Activated naive CD4-positive, alpha-beta T cell treated with anti-CD3 and anti-CD28 coated beads for 36 hours (primary cell): ENCODE measurements at regions of chr17 and their contacts with region 1.

Region 1: GRCh38 chr17:28318759-28319660 is at the start of gene TMEM97:
- DNase-seq: peak; percentile 95
- H3K4me3 Mint-ChIP-seq: peak within 1 kb of the TSS; percentile 81
- H3K27ac Mint-ChIP-seq: peak within 1 kb of the TSS; percentile 75
- H3K4me1 Mint-ChIP-seq: peaks cover 24% of the 10 kb centered on the region
- H3K27me3 Mint-ChIP-seq: no peaks in the 10 kb centered on the region
- total RNA-seq, gene TMEM97: 25.1 to 26.0 TPM

Region 2: DNA sequence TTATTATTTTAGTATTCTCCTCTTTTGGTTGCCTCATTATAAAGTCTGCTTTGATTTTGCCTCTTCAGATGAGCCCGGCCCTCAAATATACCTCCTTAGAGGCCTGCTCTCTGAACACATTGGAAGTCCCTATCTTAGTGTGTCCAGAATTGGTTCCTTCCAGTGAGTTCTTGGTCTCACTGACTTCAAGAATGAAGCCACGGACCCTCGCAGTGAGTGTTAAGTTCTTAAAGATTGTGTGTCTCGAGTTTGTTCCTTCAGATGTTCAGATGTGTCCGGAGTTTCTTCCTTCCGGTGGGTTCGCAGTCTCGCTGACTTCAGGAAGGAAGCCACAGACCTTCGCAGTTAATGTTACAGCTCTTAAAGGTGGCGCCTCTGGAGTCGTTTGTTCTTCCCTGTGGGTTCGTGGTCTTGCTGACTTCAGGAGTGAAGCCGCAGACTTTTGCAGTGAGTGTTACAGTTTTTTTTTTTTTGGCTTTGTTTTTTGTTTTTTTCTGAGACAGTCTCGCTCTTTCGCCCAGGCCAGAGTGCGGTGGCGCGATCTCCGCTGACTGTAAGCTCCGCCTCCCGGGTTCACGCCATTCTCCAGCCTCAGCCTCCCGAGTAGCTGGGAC is 472.9 kb before region 1 on chr17:
- CTCF ChIA-PET with region 1: no interaction called
- intact Hi-C with region 1: no loop called
- DNase-seq: peak; percentile 30
- H3K4me3 Mint-ChIP-seq: peak overlapping the region; percentile 60
- H3K27ac Mint-ChIP-seq: peak overlapping the region; percentile 34
- H3K4me1 Mint-ChIP-seq: peaks cover 16% of the 10 kb centered on the region
- H3K27me3 Mint-ChIP-seq: no peaks in the 10 kb centered on the region

Region 3: GRCh38 chr17:28227316-28228125 is 91.5 kb before region 1 on chr17:
- CTCF ChIA-PET with region 1: no interaction called
- intact Hi-C with region 1: loop called (anchors 5 kb)
- DNase-seq: peak; percentile 38
- H3K4me3 Mint-ChIP-seq: peak overlapping the region; percentile 69
- H3K27ac Mint-ChIP-seq: no peak overlapping the region
- H3K4me1 Mint-ChIP-seq: peaks cover 5% of the 10 kb centered on the region
- H3K27me3 Mint-ChIP-seq: peaks cover 37% of the 10 kb centered on the region

Region 4: GRCh38 chr17:28258347-28259206 is 60.4 kb before region 1 on chr17:
- CTCF ChIA-PET with region 1: no interaction called
- intact Hi-C with region 1: no loop called
- DNase-seq: no peak
- H3K4me3 Mint-ChIP-seq: no peak overlapping the region
- H3K27ac Mint-ChIP-seq: no peak overlapping the region
- H3K4me1 Mint-ChIP-seq: no peaks in the 10 kb centered on the region
- H3K27me3 Mint-ChIP-seq: no peaks in the 10 kb centered on the region

Region 5: GRCh38 chr17:28295677-28296578 is 23.1 kb before region 1 on chr17:
- CTCF ChIA-PET with region 1: interaction called, 3 read pairs
- intact Hi-C with region 1: loop called (anchors 2 kb)
- DNase-seq: no peak
- H3K4me3 Mint-ChIP-seq: no peak overlapping the region
- H3K27ac Mint-ChIP-seq: peak overlapping the region; percentile 56
- H3K4me1 Mint-ChIP-seq: peaks cover 16% of the 10 kb centered on the region
- H3K27me3 Mint-ChIP-seq: peaks cover 4% of the 10 kb centered on the region

Region 6: GRCh38 chr17:28371245-28372202 is 52.5 kb after region 1 on chr17 and contains the start of gene SARM1:
- CTCF ChIA-PET with region 1: no interaction called
- intact Hi-C with region 1: loop called (anchors 1 kb)
- DNase-seq: peak; percentile 85
- H3K4me3 Mint-ChIP-seq: peak within 1 kb of the TSS; percentile 89
- H3K27ac Mint-ChIP-seq: peak within 1 kb of the TSS; percentile 47
- H3K4me1 Mint-ChIP-seq: peaks cover 21% of the 10 kb centered on the region
- H3K27me3 Mint-ChIP-seq: no peaks in the 10 kb centered on the region
- total RNA-seq, gene SARM1: 11.7 to 12.3 TPM

Region 7: GRCh38 chr17:28426081-28426519 is 107.1 kb after region 1 on chr17:
- CTCF ChIA-PET with region 1: no interaction called
- intact Hi-C with region 1: no loop called
- DNase-seq: no peak
- H3K4me3 Mint-ChIP-seq: no peak overlapping the region
- H3K27ac Mint-ChIP-seq: no peak overlapping the region
- H3K4me1 Mint-ChIP-seq: no peaks in the 10 kb centered on the region
- H3K27me3 Mint-ChIP-seq: peaks cover 6% of the 10 kb centered on the region